OCI-LY7 (cell line): ENCODE measurements at regions of chr11 and their contacts with region 1.

Region 1: GRCh38 chr11:5004424-5005274 is 10.0 kb downstream of the OR51L1 start:
- DNase-seq: peak; percentile 38
- H3K4me3 ChIP-seq: no peak overlapping the region
- H3K27ac ChIP-seq: no peak overlapping the region
- H3K4me1 ChIP-seq: no peaks in the 10 kb centered on the region
- CTCF ChIP-seq: peak; percentile 81

Region 2: DNA sequence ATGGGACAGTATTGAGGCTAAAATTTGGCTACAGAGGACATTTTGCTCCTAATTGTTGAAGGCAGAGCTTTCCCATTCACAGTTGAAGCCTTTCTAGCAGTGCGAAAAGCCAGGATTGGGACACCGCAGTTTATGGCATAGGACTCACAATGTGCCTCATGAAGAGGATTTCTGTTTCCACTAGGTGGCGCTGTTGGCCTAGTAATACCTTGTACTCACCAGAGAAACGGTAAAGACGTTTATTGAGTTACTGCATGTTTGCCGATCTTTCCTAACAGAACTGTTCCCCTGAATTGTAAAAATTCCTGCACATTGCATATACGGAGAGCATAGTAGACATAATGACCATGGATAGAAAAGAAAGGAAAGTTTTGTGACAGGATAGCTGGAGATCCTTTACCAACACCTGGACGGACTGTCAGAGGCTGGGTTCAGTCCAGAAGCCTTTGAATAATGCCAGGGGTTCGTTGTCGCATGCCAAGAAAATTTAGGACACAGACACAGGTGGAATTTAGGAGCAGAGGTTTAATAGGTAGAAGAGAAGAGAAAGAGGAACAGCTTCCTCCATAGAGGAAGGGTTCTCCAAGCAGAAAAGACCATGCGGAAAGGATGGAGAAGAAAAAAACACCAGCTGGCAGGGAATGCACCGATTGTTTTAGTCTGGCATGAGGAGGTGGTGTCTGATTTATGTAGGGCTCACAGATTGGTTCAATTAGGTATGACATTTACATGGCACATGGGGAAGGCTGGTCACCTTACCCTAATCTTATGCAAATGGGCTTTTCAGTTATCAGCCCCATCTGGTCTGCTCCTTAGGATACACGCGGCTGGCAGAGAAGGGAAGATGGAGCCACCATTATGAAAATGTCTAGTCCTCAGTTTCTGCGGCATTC is 378.2 kb before region 1 on chr11:
- CTCF ChIA-PET with region 1: no interaction called
- POLR2A ChIA-PET with region 1: no interaction called
- intact Hi-C with region 1: loop called (anchors 2 kb)
- DNase-seq: peak; percentile 82
- H3K4me3 ChIP-seq: no peak overlapping the region
- H3K27ac ChIP-seq: no peak overlapping the region
- H3K4me1 ChIP-seq: no peaks in the 10 kb centered on the region
- CTCF ChIP-seq: peak; percentile 87

Region 3: GRCh38 chr11:4916581-4916980 is 88.1 kb before region 1 on chr11:
- CTCF ChIA-PET with region 1: no interaction called
- POLR2A ChIA-PET with region 1: no interaction called
- intact Hi-C with region 1: no loop called
- DNase-seq: no peak
- H3K4me3 ChIP-seq: no peak overlapping the region
- H3K27ac ChIP-seq: no peak overlapping the region
- H3K4me1 ChIP-seq: no peaks in the 10 kb centered on the region
- CTCF ChIP-seq: no peak